ENCODE measurements at regions of chr15 and their contacts with region 1.

Region 1: DNA sequence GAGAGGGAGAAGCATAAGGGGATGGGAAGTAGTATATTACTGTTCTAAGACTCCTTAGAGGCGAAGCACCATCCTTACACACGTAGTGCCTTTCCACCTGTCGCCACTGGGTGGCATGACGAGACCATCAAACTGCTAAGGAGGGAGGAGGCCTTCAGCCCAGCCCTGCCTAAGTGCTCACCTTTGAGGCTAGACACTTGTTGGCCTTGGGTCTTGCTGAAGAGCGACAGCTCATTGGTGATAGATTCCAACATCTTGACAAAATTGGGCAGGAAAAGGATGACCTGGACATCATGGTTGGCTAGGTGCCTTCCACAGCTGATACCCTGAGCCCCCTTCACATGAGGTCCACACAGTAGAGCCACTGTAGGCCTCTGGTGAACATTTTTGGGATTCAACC is 19.6 kb downstream of the CLK3 start:
- DNase-seq: peak; percentile 54 to 80 (median 63)
- H3K4me3 ChIP-seq: no peak overlapping the region
- H3K27ac ChIP-seq: no peak overlapping the region
- H3K4me1 ChIP-seq: no peaks in the 10 kb centered on the region
- H3K27me3 ChIP-seq: no peaks in the 10 kb centered on the region
- CTCF ChIP-seq: peak; percentile 60 to 92 (median 88)
- POLR2A ChIP-seq: no peak

Region 2: GRCh38 chr15:74730619-74731316 is 95.5 kb after region 1 on chr15:
- intact Hi-C with region 1: no loop called
- DNase-seq: no peak
- H3K4me3 ChIP-seq: no peak overlapping the region
- H3K27ac ChIP-seq: no peak overlapping the region
- H3K4me1 ChIP-seq: peaks cover 0 to 12% of the 10 kb centered on the region in 2 donors
- H3K27me3 ChIP-seq: no peaks in the 10 kb centered on the region
- CTCF ChIP-seq: no peak
- POLR2A ChIP-seq: no peak

Region 3: GRCh38 chr15:74768771-74769342 is 133.6 kb after region 1 on chr15:
- intact Hi-C with region 1: loop called (anchors 2 to 5 kb)
- DNase-seq: peak in 6 of 7 donors; percentile 52 to 80 (median 68)
- H3K4me3 ChIP-seq: no peak overlapping the region
- H3K27ac ChIP-seq: no peak overlapping the region
- H3K4me1 ChIP-seq: no peaks in the 10 kb centered on the region
- H3K27me3 ChIP-seq: no peaks in the 10 kb centered on the region
- CTCF ChIP-seq: peak; percentile 75 to 88 (median 84)
- POLR2A ChIP-seq: no peak

Region 4: GRCh38 chr15:74835307-74835823 is 200.1 kb after region 1 on chr15:
- intact Hi-C with region 1: no loop called
- DNase-seq: peak; percentile 47 to 78 (median 67)
- H3K4me3 ChIP-seq: no peak overlapping the region
- H3K27ac ChIP-seq: no peak overlapping the region
- H3K4me1 ChIP-seq: no peaks in the 10 kb centered on the region
- H3K27me3 ChIP-seq: no peaks in the 10 kb centered on the region
- CTCF ChIP-seq: peak; percentile 58 to 77 (median 68)
- POLR2A ChIP-seq: no peak

Region 5: DNA sequence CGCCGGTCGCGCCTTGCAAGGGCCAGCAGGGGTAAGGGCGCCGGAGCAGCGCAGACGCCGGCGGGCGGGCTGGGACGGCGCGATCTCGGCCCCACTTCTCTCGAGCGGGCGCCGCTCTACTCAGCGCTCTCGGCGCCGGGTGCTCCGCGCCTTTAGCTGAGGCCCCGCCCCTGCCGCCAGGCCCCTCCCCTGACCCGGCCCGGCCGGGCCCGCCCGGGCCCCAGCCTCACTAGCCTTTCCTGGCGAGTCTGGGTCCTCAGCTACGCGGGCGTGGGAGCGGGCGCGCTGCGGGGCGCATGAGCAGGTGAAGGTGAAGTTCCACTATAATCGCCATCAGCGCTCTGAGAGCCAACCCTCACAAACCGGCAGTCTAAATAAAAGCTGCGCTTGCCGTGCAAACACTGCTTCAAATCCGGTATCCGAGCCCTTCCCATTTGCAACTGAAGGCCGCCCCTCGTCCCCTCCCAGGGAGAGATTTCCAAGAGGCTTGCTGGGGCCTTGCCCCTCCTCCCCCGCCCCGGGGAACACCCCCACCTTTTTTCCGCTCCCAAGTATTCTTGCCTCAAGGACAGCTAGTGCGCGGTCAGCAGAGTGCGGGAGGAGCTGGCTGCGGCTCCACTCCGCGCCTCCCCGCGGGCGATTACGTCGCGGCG is 321.5 kb after region 1 on chr15 and contains the start of gene RPP25:
- intact Hi-C with region 1: loop called in 1 of 2 experiments (anchors 10 kb)
- DNase-seq: peak; percentile 81 to 89 (median 86)
- H3K4me3 ChIP-seq: peak within 1 kb of the TSS in 3 of 4 donors; percentile 16 to 74 (median 54)
- H3K27ac ChIP-seq: peak within 1 kb of the TSS; percentile 20 to 94 (median 83)
- H3K4me1 ChIP-seq: peaks cover 18 to 51% of the 10 kb centered on the region in 2 donors
- H3K27me3 ChIP-seq: no peaks in the 10 kb centered on the region
- CTCF ChIP-seq: peak in 1 of 6 experiments; percentile 0
- POLR2A ChIP-seq: peak; percentile 61 to 66
- total RNA-seq, gene RPP25: 17.4 to 46.2 (median 26.4) TPM

Measured in adrenal gland (tissue), 19 donors.